ENCODE measurements at regions of chr17 and their contacts with region 1.

Region 1: GRCh38 chr17:75319904-75320691 is 30.9 kb upstream of the SLC25A19 start:
- DNase-seq: no peak
- H3K4me3 Mint-ChIP-seq: no peak overlapping the region
- H3K27ac Mint-ChIP-seq: no peak overlapping the region
- H3K4me1 Mint-ChIP-seq: no peaks in the 10 kb centered on the region
- H3K27me3 Mint-ChIP-seq: no peaks in the 10 kb centered on the region
- CTCF ChIP-seq: no peak

Region 2: DNA sequence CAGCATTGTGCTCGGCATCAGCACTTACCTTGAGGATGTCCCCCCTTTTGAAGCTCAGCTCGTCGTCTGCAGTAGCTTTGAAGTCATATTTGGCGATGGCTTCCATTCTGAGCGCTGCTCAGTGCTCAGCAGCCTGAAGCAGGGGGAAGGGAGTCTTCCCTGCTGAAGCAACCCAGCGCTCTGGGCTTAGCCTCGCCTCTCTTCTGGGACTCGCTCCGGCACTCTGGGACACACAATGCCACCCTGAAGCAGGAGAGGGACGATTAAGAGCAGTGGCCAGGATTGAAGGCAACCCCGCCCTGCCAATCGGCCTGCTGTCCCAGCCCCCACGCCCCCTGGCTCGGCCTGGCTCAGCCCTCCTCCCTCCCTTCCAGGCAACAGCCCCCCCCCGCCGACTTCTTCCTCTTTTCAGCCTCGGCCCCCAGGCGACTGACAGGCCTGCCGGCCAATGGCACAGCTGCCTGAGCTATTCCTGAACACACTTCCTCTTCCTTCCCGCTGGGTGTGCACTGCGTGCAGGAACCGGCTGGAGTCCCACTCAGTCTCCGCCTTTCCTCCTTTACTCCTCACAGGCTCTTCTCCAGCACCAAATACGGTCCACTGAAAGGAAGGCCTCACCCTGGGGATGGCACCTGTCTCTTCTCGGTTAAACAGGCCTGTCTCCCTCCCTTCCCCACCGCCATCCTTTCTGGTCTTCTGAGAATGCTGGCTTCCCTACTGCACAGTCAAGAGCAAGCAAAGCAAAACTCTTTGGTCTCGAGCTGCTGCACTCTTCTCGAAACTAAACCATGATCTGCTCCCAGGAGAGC is 73.6 kb after region 1 on chr17:
- CTCF ChIA-PET with region 1: interaction called, 30 read pairs
- intact Hi-C with region 1: no loop called
- DNase-seq: peak; percentile 98
- H3K4me3 Mint-ChIP-seq: peak overlapping the region; percentile 96
- H3K27ac Mint-ChIP-seq: peak overlapping the region; percentile 92
- H3K4me1 Mint-ChIP-seq: peaks cover 49% of the 10 kb centered on the region
- H3K27me3 Mint-ChIP-seq: no peaks in the 10 kb centered on the region
- CTCF ChIP-seq: no peak

Region 3: GRCh38 chr17:75405365-75406221 is 85.5 kb after region 1 on chr17 and contains the start of gene GRB2:
- CTCF ChIA-PET with region 1: interaction called, 16 read pairs
- intact Hi-C with region 1: loop called (anchors 1 kb)
- DNase-seq: peak; percentile 99
- H3K4me3 Mint-ChIP-seq: peak within 1 kb of the TSS; percentile 73
- H3K27ac Mint-ChIP-seq: peak within 1 kb of the TSS; percentile 55
- H3K4me1 Mint-ChIP-seq: peaks cover 13% of the 10 kb centered on the region
- H3K27me3 Mint-ChIP-seq: peaks cover 39% of the 10 kb centered on the region
- CTCF ChIP-seq: no peak
- total RNA-seq, gene GRB2: 79.7 and 99.9 TPM in 2 replicates

Region 4: DNA sequence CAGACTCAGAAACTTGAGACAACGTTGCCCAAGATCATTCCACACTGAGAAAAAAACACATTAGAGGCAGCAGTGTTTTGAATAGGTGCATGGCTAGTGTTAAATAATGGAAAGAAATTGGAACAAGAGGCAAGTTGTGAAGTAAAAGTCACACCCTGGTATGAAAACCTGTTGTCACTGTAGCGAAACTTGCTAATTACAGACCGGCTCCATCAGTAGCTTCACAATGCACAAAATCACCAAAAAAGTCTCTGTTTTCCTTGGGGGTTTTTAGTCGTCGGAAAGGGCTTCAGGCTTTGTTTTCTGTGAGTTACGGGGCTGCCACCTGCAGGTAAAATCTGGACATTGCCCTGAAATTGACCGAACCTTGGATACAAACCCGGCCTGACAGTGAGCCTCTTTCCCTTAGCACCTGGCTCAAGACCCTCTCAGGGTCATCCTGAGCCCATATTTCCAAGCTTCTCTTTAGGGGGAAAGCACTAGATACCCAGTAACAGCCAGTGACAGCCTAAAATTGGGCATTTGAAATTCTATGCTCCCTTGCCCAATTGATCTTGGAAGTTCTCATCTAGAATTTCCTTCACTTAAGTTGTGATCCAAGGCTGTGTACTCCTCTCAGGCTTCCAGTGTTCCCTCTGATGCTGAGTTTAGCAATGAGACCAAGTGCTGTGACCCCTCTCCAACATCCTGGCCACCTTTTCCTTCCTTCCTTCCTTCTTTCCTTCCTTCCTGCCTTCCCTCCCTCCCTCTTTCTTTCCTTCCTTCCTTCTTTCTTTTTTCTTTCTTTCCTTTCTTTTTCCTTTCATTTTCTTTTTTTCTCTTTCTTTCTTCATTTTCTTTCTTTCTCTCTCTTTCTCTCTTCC is 92.6 kb after region 1 on chr17:
- CTCF ChIA-PET with region 1: interaction called, 10 read pairs
- intact Hi-C with region 1: no loop called
- DNase-seq: peak; percentile 70
- H3K4me3 Mint-ChIP-seq: no peak overlapping the region
- H3K27ac Mint-ChIP-seq: no peak overlapping the region
- H3K4me1 Mint-ChIP-seq: no peaks in the 10 kb centered on the region
- H3K27me3 Mint-ChIP-seq: peaks cover 75% of the 10 kb centered on the region
- CTCF ChIP-seq: peak; percentile 80

Region 5: GRCh38 chr17:76107509-76107908 is 787.4 kb after region 1 on chr17:
- CTCF ChIA-PET with region 1: no interaction called
- intact Hi-C with region 1: no loop called
- DNase-seq: no peak
- H3K4me3 Mint-ChIP-seq: no peak overlapping the region
- H3K27ac Mint-ChIP-seq: no peak overlapping the region
- H3K4me1 Mint-ChIP-seq: no peaks in the 10 kb centered on the region
- H3K27me3 Mint-ChIP-seq: no peaks in the 10 kb centered on the region
- CTCF ChIP-seq: no peak

Measured in Calu3 (cell line).